HepG2 (cell line): ENCODE measurements at regions of chr3 and their contacts with region 1.

Region 1: GRCh38 chr3:28171962-28172361 is 69.5 kb upstream of the CMC1 start:
- DNase-seq: no peak
- ATAC-seq: no peak
- H3K4me3 ChIP-seq: no peak overlapping the region
- H3K27ac ChIP-seq: no peak overlapping the region
- H3K4me1 ChIP-seq: no peaks in the 10 kb centered on the region
- H3K27me3 ChIP-seq: no peaks in the 10 kb centered on the region; a peak in 1 of 5 replicates
- CTCF ChIP-seq: no peak
- EP300 ChIP-seq: no peak
- POLR2A ChIP-seq: no peak
- RAD21 ChIP-seq: no peak

Region 2: DNA sequence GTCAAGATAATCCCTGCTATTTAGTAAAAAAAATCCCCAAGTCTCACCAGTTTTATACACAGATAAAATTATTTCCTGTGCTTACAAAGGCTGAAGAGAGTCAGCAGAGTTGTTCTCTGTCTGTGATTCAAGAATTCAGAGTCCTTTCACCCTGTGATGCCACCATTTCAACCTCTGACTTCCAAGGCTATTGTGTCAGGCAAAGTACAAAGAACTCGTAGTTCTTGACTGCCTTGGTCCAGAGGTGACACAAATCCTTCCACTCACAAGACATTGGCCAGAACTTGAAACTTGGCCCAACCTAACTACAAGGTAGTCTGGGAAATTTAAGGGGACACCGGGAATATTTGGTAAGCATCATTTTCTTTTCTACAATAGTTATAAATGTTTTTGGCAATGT is 34.5 kb after region 1 on chr3:
- CTCF ChIA-PET with region 1: no interaction called
- POLR2A ChIA-PET with region 1: no interaction called
- in situ Hi-C with region 1: no loop called
- intact Hi-C with region 1: loop called (anchors 5 kb)
- DNase-seq: no peak
- ATAC-seq: no peak
- H3K4me3 ChIP-seq: no peak overlapping the region
- H3K27ac ChIP-seq: no peak overlapping the region
- H3K4me1 ChIP-seq: peaks cover 12% of the 10 kb centered on the region; the same call in 1 of the 2 replicates
- H3K27me3 ChIP-seq: no peaks in the 10 kb centered on the region
- CTCF ChIP-seq: no peak
- EP300 ChIP-seq: no peak
- POLR2A ChIP-seq: no peak
- RAD21 ChIP-seq: no peak